GM23248 (cell line): ENCODE measurements at regions of chr9 and their contacts with region 1.

Region 1: GRCh38 chr9:85258823-85259370 is 482.9 kb downstream of the AGTPBP1 start:
- DNase-seq: peak; percentile 89
- H3K4me3 ChIP-seq: 0 out of 2 replicates have a peak overlapping the region, but pooled peaks have one; percentile 38
- H3K27ac ChIP-seq: no peak overlapping the region
- H3K4me1 ChIP-seq: no peaks in the 10 kb centered on the region; the same call in 1 of the 2 replicates
- H3K27me3 ChIP-seq: peaks cover 9% of the 10 kb centered on the region

Region 2: GRCh38 chr9:84404095-84404686 is 854.7 kb before region 1 on chr9:
- in situ Hi-C with region 1: loop called (anchors 25 kb)
- DNase-seq: peak; percentile 10
- H3K4me3 ChIP-seq: no peak overlapping the region
- H3K27ac ChIP-seq: no peak overlapping the region
- H3K4me1 ChIP-seq: no peaks in the 10 kb centered on the region
- H3K27me3 ChIP-seq: no peaks in the 10 kb centered on the region

Region 3: GRCh38 chr9:84697509-84698114 is 561.3 kb before region 1 on chr9:
- in situ Hi-C with region 1: loop called (anchors 25 kb)
- DNase-seq: peak; percentile 68
- H3K4me3 ChIP-seq: no peak overlapping the region
- H3K27ac ChIP-seq: no peak overlapping the region
- H3K4me1 ChIP-seq: no peaks in the 10 kb centered on the region
- H3K27me3 ChIP-seq: peaks cover 2% of the 10 kb centered on the region; the same call in 1 of the 2 replicates